Mammary epithelial cell (primary cell): ENCODE measurements at regions of chr22 and their contacts with region 1.

Region 1: DNA sequence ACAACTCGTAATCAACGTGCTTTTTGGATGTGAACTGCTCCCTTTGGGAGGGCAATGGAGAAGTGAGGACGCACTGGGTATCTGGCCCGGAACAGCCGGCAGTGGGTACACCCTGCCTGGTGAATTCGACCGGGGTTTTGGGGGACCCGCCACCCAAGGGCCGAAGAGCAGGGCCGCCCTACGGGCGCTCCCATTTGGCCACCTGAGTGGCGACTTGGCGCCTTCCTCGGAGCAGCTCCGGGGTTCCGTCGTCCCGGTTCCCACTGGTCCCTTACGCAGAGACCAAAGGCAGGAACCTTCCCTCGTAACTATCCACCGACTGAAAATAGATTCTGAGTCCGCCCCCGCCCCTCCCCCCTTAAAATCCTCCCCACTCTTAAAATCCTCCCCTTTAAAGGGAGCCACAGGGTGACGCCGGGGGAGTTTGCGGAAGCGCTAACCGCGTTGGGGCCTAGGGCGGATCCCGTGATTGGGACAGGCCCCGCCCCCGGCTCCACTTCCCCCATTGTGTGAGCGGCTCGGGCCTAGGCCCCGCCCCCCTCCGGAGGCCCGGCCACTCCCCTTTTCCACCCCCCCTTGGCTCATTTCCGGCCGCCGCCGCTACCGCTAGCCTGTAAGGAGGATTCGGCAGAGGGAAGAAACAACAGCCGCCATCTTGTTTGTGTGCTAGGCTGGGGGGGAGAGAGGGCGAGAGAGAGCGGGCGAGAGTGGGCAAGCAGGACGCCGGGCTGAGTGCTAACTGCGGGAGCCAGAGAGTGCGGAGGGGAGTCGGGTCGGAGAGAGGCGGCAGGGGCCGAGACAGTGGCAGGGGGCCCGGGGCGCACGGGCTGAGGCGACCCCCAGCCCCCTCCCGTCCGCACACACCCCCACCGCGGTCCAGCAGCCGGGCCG is 1.0 kb upstream of the EP300 start:
- DNase-seq: peak; percentile 98
- H3K4me3 ChIP-seq: peak overlapping the region; percentile 92 to 98 (median 96)
- H3K27ac ChIP-seq: peak overlapping the region; percentile 88
- H3K4me1 ChIP-seq: peaks cover 6% of the 10 kb centered on the region
- H3K27me3 ChIP-seq: no peaks in the 10 kb centered on the region
- CTCF ChIP-seq: no peak

Region 2: GRCh38 chr22:40922484-40923303 is 168.7 kb before region 1 on chr22:
- CTCF ChIA-PET with region 1: interaction called, 5 read pairs
- dilution Hi-C with region 1: no loop called
- in situ Hi-C with region 1: no loop called
- intact Hi-C with region 1: loop called (anchors 2 kb)
- DNase-seq: peak; percentile 35
- H3K4me3 ChIP-seq: no peak overlapping the region
- H3K27ac ChIP-seq: no peak overlapping the region
- H3K4me1 ChIP-seq: no peaks in the 10 kb centered on the region
- H3K27me3 ChIP-seq: no peaks in the 10 kb centered on the region
- CTCF ChIP-seq: peak; percentile 50 to 57

Region 3: DNA sequence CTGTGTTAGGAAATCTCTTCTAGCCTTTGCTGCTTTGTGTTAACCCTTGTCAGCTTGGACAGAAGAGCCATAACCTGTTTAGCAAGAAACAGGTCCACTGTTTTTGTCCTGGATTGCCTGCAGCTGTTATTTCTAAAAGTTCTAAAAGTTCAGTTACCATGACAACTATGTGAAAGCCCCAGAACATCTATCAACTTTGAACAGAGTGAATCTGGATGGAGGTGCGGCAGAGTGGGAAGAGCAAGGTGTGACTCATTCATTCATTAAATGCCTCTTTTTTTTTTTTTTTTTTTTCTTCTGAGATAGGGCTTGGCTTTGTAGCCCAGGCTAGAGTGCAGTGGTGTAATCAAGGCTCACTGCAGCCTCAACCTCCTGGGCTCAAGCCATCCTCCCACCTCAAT is 89.7 kb before region 1 on chr22:
- CTCF ChIA-PET with region 1: no interaction called
- dilution Hi-C with region 1: no loop called
- in situ Hi-C with region 1: no loop called
- intact Hi-C with region 1: loop called (anchors 5 kb)
- DNase-seq: peak; percentile 82
- H3K4me3 ChIP-seq: no peak overlapping the region
- H3K27ac ChIP-seq: no peak overlapping the region
- H3K4me1 ChIP-seq: peaks cover 5% of the 10 kb centered on the region
- H3K27me3 ChIP-seq: no peaks in the 10 kb centered on the region
- CTCF ChIP-seq: no peak

Region 4: GRCh38 chr22:41181349-41182241 is 90.2 kb after region 1 on chr22:
- CTCF ChIA-PET with region 1: no interaction called
- dilution Hi-C with region 1: loop called (anchors 5 kb)
- in situ Hi-C with region 1: no loop called
- intact Hi-C with region 1: no loop called
- DNase-seq: peak; percentile 59
- H3K4me3 ChIP-seq: no peak overlapping the region
- H3K27ac ChIP-seq: no peak overlapping the region
- H3K4me1 ChIP-seq: peaks cover 10% of the 10 kb centered on the region
- H3K27me3 ChIP-seq: no peaks in the 10 kb centered on the region
- CTCF ChIP-seq: no peak

Region 5: GRCh38 chr22:41381329-41382097 is 290.1 kb after region 1 on chr22 and contains the start of gene TEF:
- CTCF ChIA-PET with region 1: no interaction called
- dilution Hi-C with region 1: no loop called
- in situ Hi-C with region 1: no loop called
- intact Hi-C with region 1: loop called (anchors 2 kb)
- DNase-seq: peak; percentile 98
- H3K4me3 ChIP-seq: peak within 1 kb of the TSS; percentile 65 to 78 (median 65)
- H3K27ac ChIP-seq: peak within 1 kb of the TSS; percentile 89
- H3K4me1 ChIP-seq: peaks cover 24% of the 10 kb centered on the region
- H3K27me3 ChIP-seq: no peaks in the 10 kb centered on the region
- CTCF ChIP-seq: no peak
- total RNA-seq, gene TEF: 5.2 TPM